ENCODE measurements at regions of chr2 and their contacts with region 1.

Region 1: DNA sequence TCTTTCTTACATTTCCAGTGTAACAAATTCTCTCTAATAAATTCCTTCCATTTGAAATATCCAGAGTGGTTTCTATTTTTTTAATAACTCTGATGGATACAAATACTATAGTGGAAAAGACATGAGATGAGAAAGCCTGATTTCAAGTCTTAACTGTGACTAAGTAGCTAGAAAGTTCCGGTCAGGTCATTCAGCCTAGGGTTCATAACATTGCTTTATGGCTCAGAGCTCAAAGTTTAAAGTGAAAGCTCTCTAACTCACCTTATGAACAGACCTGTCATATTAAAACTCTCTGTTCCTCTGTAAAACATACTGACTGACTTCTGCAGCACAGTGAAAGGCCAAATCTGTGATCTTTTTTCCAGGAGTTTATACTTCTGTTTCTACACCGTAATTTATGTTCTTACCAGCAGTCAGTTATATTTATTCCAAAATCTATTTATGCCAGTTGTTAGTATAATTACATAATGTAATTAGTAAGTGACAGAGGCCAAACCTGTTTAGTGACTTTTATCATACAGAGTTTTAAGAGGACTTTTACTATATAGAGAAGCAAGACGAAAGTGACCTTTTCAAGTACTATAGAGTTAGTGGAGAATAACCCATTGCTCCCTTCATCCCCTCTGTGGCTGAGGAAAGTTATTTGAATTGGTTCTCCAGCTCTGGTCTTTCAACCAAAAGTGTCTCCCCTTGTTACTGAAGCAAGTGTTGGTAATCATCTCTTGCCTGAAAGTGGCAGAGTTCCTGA is 118.8 kb upstream of the PDE1A start:
- DNase-seq: no peak
- H3K4me3 ChIP-seq: no peak overlapping the region
- H3K27ac ChIP-seq: no peak overlapping the region
- H3K4me1 ChIP-seq: no peaks in the 10 kb centered on the region
- H3K27me3 ChIP-seq: peaks cover 2% of the 10 kb centered on the region
- CTCF ChIP-seq: no peak

Region 2: GRCh38 chr2:181540410-181540809 is 1005.2 kb before region 1 on chr2:
- CTCF ChIA-PET with region 1: no interaction called
- dilution Hi-C with region 1: no loop called
- in situ Hi-C with region 1: no loop called
- intact Hi-C with region 1: no loop called
- DNase-seq: no peak
- H3K4me3 ChIP-seq: no peak overlapping the region
- H3K27ac ChIP-seq: no peak overlapping the region
- H3K4me1 ChIP-seq: peaks cover 3% of the 10 kb centered on the region
- H3K27me3 ChIP-seq: no peaks in the 10 kb centered on the region
- CTCF ChIP-seq: no peak

Region 3: DNA sequence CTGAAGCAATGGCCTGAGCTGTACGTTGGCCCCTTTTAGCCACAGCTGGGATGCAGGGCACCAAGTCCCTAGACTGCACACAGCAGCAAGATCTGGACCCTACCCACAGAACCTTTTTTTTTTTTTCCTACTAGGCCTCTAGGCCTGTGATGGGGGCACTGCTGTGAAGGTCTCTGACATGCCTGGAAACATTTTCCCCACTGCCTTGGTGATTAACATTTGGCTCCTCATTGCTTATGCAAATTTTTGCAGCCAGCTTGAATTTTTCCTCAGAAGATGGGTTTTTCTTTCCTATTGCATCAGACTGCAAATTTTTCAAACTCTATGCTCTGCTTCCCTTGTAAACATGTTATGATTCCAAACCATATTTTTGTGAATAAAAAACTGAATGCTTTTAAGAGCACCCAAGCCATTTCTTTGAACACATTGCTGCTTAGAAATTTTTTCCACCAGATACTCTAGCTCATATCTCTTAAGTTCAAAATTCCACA is 152.3 kb before region 1 on chr2:
- CTCF ChIA-PET with region 1: no interaction called
- dilution Hi-C with region 1: no loop called
- in situ Hi-C with region 1: no loop called
- intact Hi-C with region 1: loop called (anchors 5 kb)
- DNase-seq: no peak
- H3K4me3 ChIP-seq: no peak overlapping the region
- H3K27ac ChIP-seq: no peak overlapping the region
- H3K4me1 ChIP-seq: no peaks in the 10 kb centered on the region
- H3K27me3 ChIP-seq: no peaks in the 10 kb centered on the region
- CTCF ChIP-seq: no peak

Region 4: GRCh38 chr2:182625814-182626213 is 80.2 kb after region 1 on chr2:
- CTCF ChIA-PET with region 1: no interaction called
- dilution Hi-C with region 1: no loop called
- in situ Hi-C with region 1: no loop called
- intact Hi-C with region 1: no loop called
- DNase-seq: no peak
- H3K4me3 ChIP-seq: no peak overlapping the region
- H3K27ac ChIP-seq: no peak overlapping the region
- H3K4me1 ChIP-seq: no peaks in the 10 kb centered on the region
- H3K27me3 ChIP-seq: no peaks in the 10 kb centered on the region
- CTCF ChIP-seq: no peak